ENCODE measurements at regions of chr16 and their contacts with region 1.

Region 1: GRCh38 chr16:88785106-88785924 is at the start of gene PIEZO1:
- DNase-seq: peak; percentile 76 to 93 (median 85)
- ATAC-seq: peak; percentile 77
- H3K4me3 ChIP-seq: peak within 1 kb of the TSS; percentile 54
- H3K4me3 Mint-ChIP-seq: peak within 1 kb of the TSS; percentile 66 to 87 (median 76)
- H3K27ac ChIP-seq: peak within 1 kb of the TSS; percentile 72
- H3K27ac Mint-ChIP-seq: peak within 1 kb of the TSS in 6 of 9 donors; percentile 45 to 92 (median 61)
- H3K4me1 ChIP-seq: peaks cover 48 to 49% of the 10 kb centered on the region in 2 donors
- H3K4me1 Mint-ChIP-seq: peaks cover 35 to 45% (median 45%) of the 10 kb centered on the region in 7 donors
- H3K27me3 ChIP-seq: no peaks in the 10 kb centered on the region
- H3K27me3 Mint-ChIP-seq: no peaks in the 10 kb centered on the region
- total RNA-seq, gene PIEZO1: 84.5 to 237 (median 124) TPM

Region 2: GRCh38 chr16:88686439-88687253 is 98.7 kb before region 1 on chr16 and contains the start of gene SNAI3:
- CTCF ChIA-PET with region 1: no interaction called
- POLR2A ChIA-PET with region 1: interaction called, 3 read pairs
- intact Hi-C with region 1: loop called in 1 of 2 experiments (anchors 1 kb)
- DNase-seq: peak; percentile 69 to 96 (median 80)
- ATAC-seq: peak; percentile 91
- H3K4me3 ChIP-seq: peak within 1 kb of the TSS; percentile 85
- H3K4me3 Mint-ChIP-seq: peak within 1 kb of the TSS; percentile 72 to 87 (median 81)
- H3K27ac ChIP-seq: peak within 1 kb of the TSS; percentile 77
- H3K27ac Mint-ChIP-seq: peak within 1 kb of the TSS in 8 of 9 donors; percentile 6 to 81 (median 63)
- H3K4me1 ChIP-seq: peaks cover 21 to 48% of the 10 kb centered on the region in 2 donors
- H3K4me1 Mint-ChIP-seq: peaks cover 23 to 76% (median 59%) of the 10 kb centered on the region in 7 donors
- H3K27me3 ChIP-seq: no peaks in the 10 kb centered on the region
- H3K27me3 Mint-ChIP-seq: no peaks in the 10 kb centered on the region
- total RNA-seq, gene SNAI3: 2.7 to 13.0 (median 6.1) TPM

Region 3: DNA sequence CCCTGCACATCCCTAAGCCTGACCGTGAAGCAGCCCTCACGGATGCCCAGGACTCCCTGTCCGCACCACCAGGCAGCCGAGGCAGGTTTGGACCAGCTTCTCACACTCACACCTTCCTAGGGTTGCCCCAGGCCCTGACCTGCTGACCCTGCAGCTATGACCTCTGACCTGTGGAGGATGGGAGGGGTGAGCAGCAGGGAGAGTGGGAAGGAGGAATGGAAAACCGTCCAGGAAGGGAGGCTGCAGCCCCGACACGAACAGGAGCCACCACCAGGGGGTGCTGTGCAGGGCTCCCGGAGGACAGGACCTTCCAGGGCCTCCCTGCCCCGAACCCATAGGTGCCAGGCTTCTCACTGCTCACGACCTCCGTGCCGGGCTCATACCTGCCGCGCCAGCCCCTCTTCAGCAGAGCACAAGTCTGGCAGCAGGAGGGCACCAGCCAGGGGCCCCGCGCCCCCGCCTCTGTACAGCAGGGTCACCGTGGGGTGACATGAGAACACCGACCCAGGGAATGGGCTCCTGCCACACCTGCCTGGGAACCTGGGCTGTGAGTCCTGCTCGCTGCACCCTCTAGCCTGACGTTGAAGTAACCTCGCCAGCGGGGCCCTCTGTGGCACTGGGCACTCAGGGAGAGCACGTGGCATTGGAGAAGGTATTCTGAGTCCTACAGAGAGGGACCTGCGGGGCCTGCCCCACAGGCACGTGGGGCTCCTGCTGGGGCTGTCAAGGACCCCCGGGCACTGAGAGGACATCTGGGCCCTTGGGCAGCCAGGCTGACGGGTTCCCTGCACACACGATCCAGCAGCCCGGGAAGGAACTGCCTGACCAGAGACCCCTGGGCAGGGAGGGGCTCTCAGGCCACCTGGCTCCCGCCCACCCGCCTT is 41.4 kb before region 1 on chr16:
- CTCF ChIA-PET with region 1: interaction called, 17 read pairs
- POLR2A ChIA-PET with region 1: interaction called, 29 read pairs
- intact Hi-C with region 1: loop called (anchors 1 kb)
- DNase-seq: peak; percentile 55 to 81 (median 69)
- ATAC-seq: peak; percentile 71
- H3K4me3 ChIP-seq: no peak overlapping the region
- H3K4me3 Mint-ChIP-seq: peak overlapping the region in 3 of 10 donors; percentile 16 to 69 (median 44)
- H3K27ac ChIP-seq: no peak overlapping the region
- H3K27ac Mint-ChIP-seq: peak overlapping the region in 1 of 9 donors; percentile 29
- H3K4me1 ChIP-seq: peaks cover 22 to 31% of the 10 kb centered on the region in 2 donors
- H3K4me1 Mint-ChIP-seq: peaks cover 9 to 27% (median 17%) of the 10 kb centered on the region in 7 donors
- H3K27me3 ChIP-seq: no peaks in the 10 kb centered on the region
- H3K27me3 Mint-ChIP-seq: no peaks in the 10 kb centered on the region

Region 4: DNA sequence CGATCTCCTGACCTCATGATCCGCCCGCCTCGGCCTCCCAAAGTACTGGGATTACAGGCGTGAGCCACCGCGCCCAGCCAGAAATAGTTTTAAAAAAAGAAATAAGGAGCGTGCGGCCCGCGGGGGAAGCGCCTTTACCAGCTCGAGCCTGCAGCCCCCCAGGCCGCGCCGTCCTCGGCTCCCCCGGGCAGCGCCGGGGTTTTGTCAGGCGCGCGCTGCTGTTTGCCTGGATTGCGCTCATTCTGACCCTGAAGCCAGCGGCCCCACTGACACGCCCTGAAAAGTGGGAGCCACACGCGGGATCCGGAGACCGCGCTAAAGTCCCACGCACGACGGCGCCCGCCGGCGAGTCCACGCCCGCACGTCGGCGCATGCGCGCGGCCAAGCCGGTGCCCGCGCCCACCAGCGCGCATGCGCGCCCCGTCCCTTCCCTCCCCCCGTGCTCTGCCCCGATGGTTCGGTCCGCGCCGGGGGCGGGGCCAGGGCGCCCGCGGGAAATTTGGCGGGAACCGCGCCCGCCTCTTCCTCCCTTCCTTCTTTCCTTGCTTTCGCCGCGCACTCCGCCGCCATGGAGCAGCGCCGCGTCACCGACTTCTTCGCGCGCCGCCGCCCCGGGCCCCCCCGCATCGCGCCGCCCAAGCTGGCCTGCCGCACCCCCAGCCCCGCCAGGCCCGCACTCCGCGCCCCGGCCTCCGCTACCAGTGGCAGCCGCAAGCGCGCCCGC is 18.1 kb after region 1 on chr16 and contains the start of gene CDT1:
- CTCF ChIA-PET with region 1: interaction called, 3 read pairs
- POLR2A ChIA-PET with region 1: interaction called, 16 read pairs
- intact Hi-C with region 1: loop called (anchors 1 kb)
- DNase-seq: peak; percentile 73 to 96 (median 85)
- ATAC-seq: peak; percentile 85
- H3K4me3 ChIP-seq: peak within 1 kb of the TSS; percentile 68
- H3K4me3 Mint-ChIP-seq: peak within 1 kb of the TSS; percentile 82 to 90 (median 87)
- H3K27ac ChIP-seq: peak within 1 kb of the TSS; percentile 76
- H3K27ac Mint-ChIP-seq: peak within 1 kb of the TSS; percentile 77 to 90 (median 85)
- H3K4me1 ChIP-seq: peaks cover 10 to 15% of the 10 kb centered on the region in 2 donors
- H3K4me1 Mint-ChIP-seq: peaks cover 9 to 36% (median 20%) of the 10 kb centered on the region in 7 donors
- H3K27me3 ChIP-seq: no peaks in the 10 kb centered on the region
- H3K27me3 Mint-ChIP-seq: no peaks in the 10 kb centered on the region
- total RNA-seq, gene CDT1: 0.35 to 79.2 (median 1.6) TPM in 4 of 5 experiments, not detected in the other